ENCODE measurements at regions of chr17 and their contacts with region 1.

Region 1: DNA sequence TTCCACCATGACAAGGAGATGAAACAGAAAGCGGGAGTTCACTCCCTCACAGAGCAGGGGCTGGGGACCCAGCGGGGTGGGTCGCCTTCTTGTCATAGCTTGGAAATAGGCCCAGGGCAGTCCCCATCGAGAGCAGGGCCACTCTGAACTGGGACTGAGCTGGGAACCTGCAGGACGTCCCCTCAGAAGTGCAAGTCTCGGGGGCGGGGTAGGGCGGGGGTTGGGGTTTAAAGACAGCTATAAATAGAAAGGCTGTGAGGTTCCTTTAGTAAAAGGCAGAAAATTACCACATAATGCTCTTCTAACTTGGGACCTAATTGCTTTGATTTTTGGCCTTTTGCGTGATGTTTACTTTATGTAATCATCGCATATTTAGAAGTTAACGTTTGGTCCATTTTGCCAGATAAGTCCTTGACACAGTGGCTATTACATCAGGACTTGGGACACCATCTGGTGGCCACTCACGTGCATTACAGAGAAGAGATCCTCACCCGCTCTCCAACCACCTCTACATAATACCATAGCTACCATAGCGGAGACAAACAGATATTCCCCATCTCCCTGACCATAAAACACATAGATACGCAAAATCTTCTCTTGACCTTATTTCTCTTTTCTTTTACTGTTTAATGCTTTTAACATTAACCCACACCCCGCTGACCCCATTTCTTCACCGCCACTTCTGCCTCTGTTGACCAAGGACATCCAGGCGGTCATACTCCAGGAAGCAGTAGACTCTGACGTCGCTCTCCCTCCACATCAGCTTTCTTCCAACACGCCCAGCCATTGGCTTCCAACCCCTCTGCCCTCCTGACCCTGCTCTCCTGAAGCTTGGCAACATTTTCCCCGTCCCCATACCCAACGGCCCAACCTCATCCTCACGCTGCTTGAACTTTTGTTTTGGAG is 27.5 kb upstream of the PIK3R6 start:
- DNase-seq: peak; percentile 77
- ATAC-seq: peak; percentile 60
- H3K4me3 Mint-ChIP-seq: no peak overlapping the region
- H3K27ac Mint-ChIP-seq: peak overlapping the region; percentile 60
- H3K4me1 Mint-ChIP-seq: peaks cover 69% of the 10 kb centered on the region
- H3K27me3 Mint-ChIP-seq: no peaks in the 10 kb centered on the region
- CTCF ChIP-seq: peak; percentile 84

Region 2: GRCh38 chr17:8909586-8910270 is 14.8 kb after region 1 on chr17:
- CTCF ChIA-PET with region 1: interaction called, 10 read pairs
- POLR2A ChIA-PET with region 1: interaction called, 38 read pairs
- intact Hi-C with region 1: no loop called
- DNase-seq: no peak
- ATAC-seq: no peak
- H3K4me3 Mint-ChIP-seq: no peak overlapping the region
- H3K27ac Mint-ChIP-seq: peak overlapping the region; percentile 7
- H3K4me1 Mint-ChIP-seq: peaks cover 11% of the 10 kb centered on the region
- H3K27me3 Mint-ChIP-seq: no peaks in the 10 kb centered on the region
- CTCF ChIP-seq: no peak

Region 3: GRCh38 chr17:8941520-8941919 is 46.6 kb after region 1 on chr17:
- CTCF ChIA-PET with region 1: interaction called, 19 read pairs
- POLR2A ChIA-PET with region 1: interaction called, 11 read pairs
- intact Hi-C with region 1: no loop called
- DNase-seq: peak; percentile 89
- ATAC-seq: peak; percentile 41
- H3K4me3 Mint-ChIP-seq: peak overlapping the region; percentile 67
- H3K27ac Mint-ChIP-seq: peak overlapping the region; percentile 96
- H3K4me1 Mint-ChIP-seq: peaks cover 87% of the 10 kb centered on the region
- H3K27me3 Mint-ChIP-seq: no peaks in the 10 kb centered on the region
- CTCF ChIP-seq: no peak

Region 4: GRCh38 chr17:8954339-8954738 is 59.4 kb after region 1 on chr17:
- CTCF ChIA-PET with region 1: interaction called, 18 read pairs
- POLR2A ChIA-PET with region 1: interaction called, 5 read pairs
- intact Hi-C with region 1: no loop called
- DNase-seq: peak; percentile 87
- ATAC-seq: peak; percentile 79
- H3K4me3 Mint-ChIP-seq: peak overlapping the region; percentile 8
- H3K27ac Mint-ChIP-seq: peak overlapping the region; percentile 87
- H3K4me1 Mint-ChIP-seq: peaks cover 95% of the 10 kb centered on the region
- H3K27me3 Mint-ChIP-seq: no peaks in the 10 kb centered on the region
- CTCF ChIP-seq: no peak

Region 5: GRCh38 chr17:8960325-8961140 is 65.6 kb after region 1 on chr17:
- CTCF ChIA-PET with region 1: interaction called, 15 read pairs
- POLR2A ChIA-PET with region 1: interaction called, 12 read pairs
- intact Hi-C with region 1: no loop called
- DNase-seq: no peak
- ATAC-seq: no peak
- H3K4me3 Mint-ChIP-seq: peak overlapping the region; percentile 11
- H3K27ac Mint-ChIP-seq: peak overlapping the region; percentile 86
- H3K4me1 Mint-ChIP-seq: peaks cover 80% of the 10 kb centered on the region
- H3K27me3 Mint-ChIP-seq: no peaks in the 10 kb centered on the region
- CTCF ChIP-seq: no peak

Measured in activated CD8-positive, alpha-beta T cell treated with anti-CD3 and anti-CD28 coated beads for 36 hours (primary cell).